A549 (cell line): ENCODE measurements at regions of chr14 and their contacts with region 1.

Region 1: GRCh38 chr14:67837011-67837624 is 17.5 kb downstream of the RAD51B start:
- DNase-seq: peak; percentile 29 to 85
- ATAC-seq: peak in 1 of 2 experiments; percentile 74; a peak in 4 of 6 replicates
- H3K4me3 ChIP-seq: no peak overlapping the region
- H3K27ac ChIP-seq: no peak overlapping the region
- H3K4me1 ChIP-seq: no peaks in the 10 kb centered on the region
- CTCF ChIP-seq: peak; percentile 90
- EP300 ChIP-seq: no peak
- POLR2A ChIP-seq: no peak
- RAD21 ChIP-seq: peak; percentile 86 to 87

Region 2: DNA sequence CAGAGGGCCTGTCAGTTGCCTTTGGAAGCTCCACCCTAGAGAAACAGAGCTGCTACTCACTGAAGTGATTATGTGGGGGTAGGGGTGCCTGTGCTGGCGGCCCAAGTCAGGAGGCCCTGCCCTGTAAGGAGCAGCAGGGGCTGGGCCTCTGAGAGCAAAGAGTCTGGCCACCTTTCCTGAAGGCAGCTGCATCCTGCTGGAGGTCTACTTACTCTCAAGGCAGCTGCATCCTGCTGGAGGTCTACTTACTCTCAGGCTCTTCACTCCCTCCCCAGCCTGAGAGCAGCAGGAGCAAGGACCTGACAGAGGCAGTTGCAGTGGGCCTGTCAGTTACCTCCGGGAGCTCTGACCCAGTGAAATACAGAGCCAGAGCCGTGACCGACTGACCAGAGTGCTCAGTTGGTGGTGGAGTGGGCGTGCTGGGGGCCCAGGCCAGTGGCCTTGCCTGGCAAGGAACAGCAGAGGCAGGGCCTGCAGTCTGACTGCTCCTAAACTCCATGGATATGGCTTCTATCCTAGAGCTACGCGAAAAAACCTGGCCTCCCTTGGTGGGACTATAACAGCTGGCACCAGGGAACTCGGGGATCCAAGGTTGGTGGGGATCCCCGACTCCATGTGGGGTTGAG is 14.8 kb after region 1 on chr14:
- CTCF ChIA-PET with region 1: interaction called, 17 read pairs
- POLR2A ChIA-PET with region 1: no interaction called
- DNase-seq: no peak
- ATAC-seq: no peak
- H3K4me3 ChIP-seq: no peak overlapping the region
- H3K27ac ChIP-seq: no peak overlapping the region
- H3K4me1 ChIP-seq: no peaks in the 10 kb centered on the region
- CTCF ChIP-seq: no peak
- EP300 ChIP-seq: no peak
- POLR2A ChIP-seq: no peak
- RAD21 ChIP-seq: no peak

Region 3: DNA sequence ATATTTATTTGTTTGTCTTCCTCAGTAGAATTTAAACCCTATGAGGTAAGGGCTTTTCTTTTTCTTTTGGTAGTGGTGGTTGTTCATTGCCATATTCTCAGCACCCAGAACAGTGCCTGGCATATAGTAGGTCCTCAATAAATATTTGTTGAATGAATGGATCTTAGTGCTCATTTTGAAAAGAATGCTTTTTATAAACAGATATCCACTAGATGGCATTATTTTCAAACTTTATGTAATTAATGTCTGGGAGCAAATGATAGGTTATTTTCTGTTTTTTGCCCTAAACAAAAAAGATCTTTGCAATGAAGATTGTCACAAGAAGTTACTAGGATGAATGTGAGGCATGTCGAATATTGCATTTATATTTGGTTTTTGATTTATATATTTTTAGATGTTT is 46.6 kb after region 1 on chr14:
- CTCF ChIA-PET with region 1: interaction called, 13 read pairs
- POLR2A ChIA-PET with region 1: no interaction called
- DNase-seq: peak; percentile 18
- ATAC-seq: no peak
- H3K4me3 ChIP-seq: no peak overlapping the region
- H3K27ac ChIP-seq: peak overlapping the region in 1 of 2 experiments; percentile 71; a peak in 2 of 6 replicates
- H3K4me1 ChIP-seq: peaks cover 12% of the 10 kb centered on the region; the same call in 1 of the 3 replicates
- CTCF ChIP-seq: peak; percentile 65
- EP300 ChIP-seq: no peak
- POLR2A ChIP-seq: no peak
- RAD21 ChIP-seq: peak; percentile 64 to 79